Naive thymus-derived CD4-positive, alpha-beta T cell (primary cell): ENCODE measurements at regions of chr5 and their contacts with region 1.

Region 1: GRCh38 chr5:151115274-151115905 is 34.6 kb upstream of the TNIP1 start:
- DNase-seq: peak; percentile 49 to 72 (median 67)
- ATAC-seq: peak; percentile 95
- H3K4me3 ChIP-seq: no peak overlapping the region
- H3K4me3 Mint-ChIP-seq: no peak overlapping the region
- H3K27ac ChIP-seq: no peak overlapping the region
- H3K27ac Mint-ChIP-seq: peak overlapping the region in 2 of 9 donors; percentile 58 to 59
- H3K4me1 ChIP-seq: no peaks in the 10 kb centered on the region
- H3K4me1 Mint-ChIP-seq: peaks cover 4 to 17% (median 12%) of the 10 kb centered on the region in 7 donors
- H3K27me3 ChIP-seq: no peaks in the 10 kb centered on the region
- H3K27me3 Mint-ChIP-seq: no peaks in the 10 kb centered on the region

Region 2: GRCh38 chr5:150394131-150394530 is 721.3 kb before region 1 on chr5:
- CTCF ChIA-PET with region 1: no interaction called
- POLR2A ChIA-PET with region 1: no interaction called
- intact Hi-C with region 1: no loop called
- DNase-seq: no peak
- ATAC-seq: peak; percentile 7
- H3K4me3 ChIP-seq: no peak overlapping the region
- H3K4me3 Mint-ChIP-seq: no peak overlapping the region
- H3K27ac ChIP-seq: no peak overlapping the region
- H3K27ac Mint-ChIP-seq: no peak overlapping the region
- H3K4me1 ChIP-seq: no peaks in the 10 kb centered on the region
- H3K4me1 Mint-ChIP-seq: peaks cover 0 to 1% (median 0%) of the 10 kb centered on the region in 7 donors
- H3K27me3 ChIP-seq: no peaks in the 10 kb centered on the region
- H3K27me3 Mint-ChIP-seq: no peaks in the 10 kb centered on the region

Region 3: DNA sequence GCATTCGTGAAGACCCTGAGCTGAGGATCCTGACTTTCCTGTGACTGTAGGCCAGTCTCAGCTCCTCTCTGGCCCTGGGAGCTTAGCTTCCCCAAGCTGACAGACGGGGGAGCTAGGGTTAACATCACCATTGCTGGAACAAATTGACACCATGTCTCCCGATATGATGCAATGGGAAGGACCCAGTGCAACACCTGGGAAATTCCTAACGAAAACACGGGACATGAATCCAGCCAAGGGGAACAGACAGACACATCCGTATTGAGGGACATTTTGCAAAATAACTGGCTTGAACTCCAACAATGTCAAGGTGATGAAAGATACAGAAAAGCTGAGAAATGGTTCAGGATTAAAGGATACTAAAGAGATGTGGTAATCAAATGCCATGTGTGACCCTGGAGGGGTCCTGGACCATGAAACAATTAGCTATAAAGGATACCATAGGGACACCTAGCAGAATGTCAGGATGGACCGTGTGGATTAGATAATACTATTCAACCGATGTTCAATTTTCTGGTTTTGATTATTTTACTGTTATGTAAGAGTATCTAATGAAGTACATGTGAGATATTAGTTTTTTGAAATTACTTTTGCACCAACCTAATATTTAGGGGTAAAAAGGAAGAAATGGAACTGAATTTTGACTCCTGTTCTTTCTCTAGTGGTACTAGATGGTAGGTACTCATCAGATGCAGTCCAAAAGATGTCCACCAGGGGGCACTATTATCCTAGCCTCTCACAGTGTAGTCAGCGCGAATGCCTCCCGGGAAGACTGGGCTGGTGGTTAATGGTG is 554.8 kb before region 1 on chr5:
- CTCF ChIA-PET with region 1: no interaction called
- POLR2A ChIA-PET with region 1: no interaction called
- intact Hi-C with region 1: loop called in 1 of 2 experiments (anchors 2 kb)
- DNase-seq: peak; percentile 48 to 86 (median 78)
- ATAC-seq: peak; percentile 98
- H3K4me3 ChIP-seq: no peak overlapping the region
- H3K4me3 Mint-ChIP-seq: no peak overlapping the region
- H3K27ac ChIP-seq: no peak overlapping the region
- H3K27ac Mint-ChIP-seq: no peak overlapping the region
- H3K4me1 ChIP-seq: no peaks in the 10 kb centered on the region
- H3K4me1 Mint-ChIP-seq: peaks cover 0 to 3% (median 0%) of the 10 kb centered on the region in 7 donors
- H3K27me3 ChIP-seq: no peaks in the 10 kb centered on the region
- H3K27me3 Mint-ChIP-seq: peaks cover 0 to 10% (median 0%) of the 10 kb centered on the region in 5 donors

Region 4: DNA sequence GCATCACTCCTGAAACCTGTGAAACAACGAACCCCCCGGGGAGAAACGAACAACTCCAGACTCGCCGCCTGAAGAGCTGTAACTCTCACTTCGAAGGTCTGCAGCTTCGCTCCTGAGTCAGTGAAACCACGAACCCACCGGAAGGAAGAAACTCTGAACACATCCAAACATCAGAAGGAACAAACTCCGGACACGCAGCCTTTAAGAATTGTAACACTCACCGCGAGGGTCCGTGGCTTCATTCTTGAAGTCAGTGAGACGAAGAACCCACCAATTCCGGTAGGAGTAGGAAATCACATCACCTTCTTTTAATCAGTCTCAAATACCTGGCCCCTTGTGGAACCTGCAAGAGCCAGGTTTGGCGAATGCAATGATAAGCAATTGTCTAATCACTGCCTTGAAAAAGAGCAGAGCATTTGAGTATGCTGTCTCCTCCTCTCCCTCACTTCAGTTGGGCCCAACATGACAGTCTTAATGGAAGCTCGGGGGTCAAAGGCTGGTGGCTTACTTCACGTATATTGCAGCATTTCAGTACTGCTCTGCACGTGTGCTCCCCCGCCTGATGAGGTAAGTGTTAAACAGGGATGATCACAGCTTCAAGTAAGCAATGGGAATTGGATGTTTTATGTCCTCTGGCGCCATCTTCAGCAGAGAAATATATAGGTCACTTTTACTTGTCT is 268.6 kb before region 1 on chr5:
- CTCF ChIA-PET with region 1: interaction called, 3 read pairs
- POLR2A ChIA-PET with region 1: no interaction called
- intact Hi-C with region 1: loop called in 1 of 2 experiments (anchors 1 kb)
- DNase-seq: peak; percentile 17 to 83 (median 77)
- ATAC-seq: peak; percentile 98
- H3K4me3 ChIP-seq: peak overlapping the region; percentile 38
- H3K4me3 Mint-ChIP-seq: peak overlapping the region; percentile 65 to 93 (median 88)
- H3K27ac ChIP-seq: peak overlapping the region; percentile 52
- H3K27ac Mint-ChIP-seq: peak overlapping the region; percentile 65 to 94 (median 88)
- H3K4me1 ChIP-seq: no peaks in the 10 kb centered on the region
- H3K4me1 Mint-ChIP-seq: peaks cover 6 to 30% (median 19%) of the 10 kb centered on the region in 7 donors
- H3K27me3 ChIP-seq: no peaks in the 10 kb centered on the region
- H3K27me3 Mint-ChIP-seq: peaks cover 0 to 5% (median 0%) of the 10 kb centered on the region in 5 donors

Region 5: DNA sequence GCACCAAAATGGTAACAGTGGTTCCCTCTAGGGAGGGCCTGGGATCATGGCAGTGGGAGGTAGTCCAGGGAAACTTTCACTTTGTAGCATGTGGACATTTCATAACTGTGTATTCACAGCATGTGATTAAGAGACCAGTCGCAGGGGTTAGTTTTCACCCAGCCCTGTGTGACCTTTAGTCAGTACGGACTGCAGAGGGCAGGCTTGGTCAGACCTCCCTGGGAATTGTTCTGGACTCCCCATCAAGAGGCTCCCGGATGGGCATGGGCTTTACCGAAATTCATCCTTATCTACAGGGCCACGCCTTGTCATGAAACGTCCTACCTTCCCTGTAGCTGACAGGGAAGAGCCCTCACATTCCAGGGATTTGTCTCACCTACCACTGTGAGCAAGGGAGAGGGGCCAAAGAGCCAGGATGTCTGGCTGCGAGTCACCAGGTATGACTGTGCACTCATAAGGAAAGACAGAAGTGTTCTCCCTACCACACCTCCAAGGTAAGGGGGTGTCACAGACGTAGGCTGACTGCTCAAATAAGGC is 75.1 kb before region 1 on chr5:
- CTCF ChIA-PET with region 1: interaction called, 12 read pairs
- POLR2A ChIA-PET with region 1: no interaction called
- intact Hi-C with region 1: no loop called
- DNase-seq: no peak
- ATAC-seq: no peak
- H3K4me3 ChIP-seq: no peak overlapping the region
- H3K4me3 Mint-ChIP-seq: no peak overlapping the region
- H3K27ac ChIP-seq: no peak overlapping the region
- H3K27ac Mint-ChIP-seq: peak overlapping the region in 1 of 9 donors; percentile 14
- H3K4me1 ChIP-seq: no peaks in the 10 kb centered on the region
- H3K4me1 Mint-ChIP-seq: peaks cover 0 to 15% (median 0%) of the 10 kb centered on the region in 7 donors
- H3K27me3 ChIP-seq: no peaks in the 10 kb centered on the region
- H3K27me3 Mint-ChIP-seq: no peaks in the 10 kb centered on the region

Region 6: GRCh38 chr5:151080623-151081430 is 34.6 kb before region 1 on chr5 and contains the start of gene TNIP1:
- CTCF ChIA-PET with region 1: interaction called, 13 read pairs
- POLR2A ChIA-PET with region 1: interaction called, 25 read pairs
- intact Hi-C with region 1: loop called (anchors 1 kb)
- DNase-seq: peak; percentile 86 to 99 (median 90)
- ATAC-seq: peak; percentile 94
- H3K4me3 ChIP-seq: peak within 1 kb of the TSS; percentile 86
- H3K4me3 Mint-ChIP-seq: peak within 1 kb of the TSS; percentile 85 to 95 (median 90)
- H3K27ac ChIP-seq: peak within 1 kb of the TSS; percentile 96
- H3K27ac Mint-ChIP-seq: peak within 1 kb of the TSS; percentile 86 to 95 (median 91)
- H3K4me1 ChIP-seq: peaks cover 37 to 69% of the 10 kb centered on the region in 2 donors
- H3K4me1 Mint-ChIP-seq: peaks cover 53 to 84% (median 73%) of the 10 kb centered on the region in 7 donors
- H3K27me3 ChIP-seq: no peaks in the 10 kb centered on the region
- H3K27me3 Mint-ChIP-seq: no peaks in the 10 kb centered on the region
- total RNA-seq, gene TNIP1: 124 to 234 (median 131) TPM